ENCODE measurements at regions of chr7 and their contacts with region 1.

Region 1: DNA sequence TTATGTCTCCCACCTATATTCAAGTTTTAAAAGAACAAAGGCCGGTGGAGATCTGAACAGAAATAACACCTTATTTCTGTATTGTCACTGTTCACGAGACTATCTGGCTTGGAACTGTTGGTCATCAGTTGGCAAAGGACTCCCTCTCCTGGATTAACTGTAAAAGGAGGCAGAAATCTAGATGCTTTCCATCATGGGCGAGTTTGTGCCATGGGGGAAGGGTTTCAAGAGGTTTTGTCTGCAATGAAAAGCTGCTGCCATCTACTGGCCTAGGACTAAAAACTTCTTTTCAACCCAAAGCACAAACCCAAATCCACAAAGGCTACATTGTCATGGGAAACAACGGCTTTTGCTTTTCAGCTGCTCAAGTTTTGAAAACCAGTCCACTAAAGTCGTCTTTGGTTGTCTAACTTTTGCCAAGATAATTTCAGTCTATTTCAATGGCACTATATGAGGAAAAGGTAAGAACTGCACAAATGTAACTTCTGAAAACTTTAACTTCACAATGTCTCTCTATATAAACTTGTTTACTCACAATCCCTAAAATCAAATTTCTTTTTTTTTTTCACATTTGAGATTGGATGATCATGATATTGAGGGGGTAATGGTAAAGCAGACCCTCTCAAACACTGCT is 196.8 kb downstream of the SKAP2 start:
- DNase-seq: peak; percentile 94
- ATAC-seq: peak; percentile 93
- H3K4me3 ChIP-seq: no peak overlapping the region
- H3K27ac ChIP-seq: no peak overlapping the region
- H3K4me1 ChIP-seq: peaks cover 24% of the 10 kb centered on the region
- H3K27me3 ChIP-seq: no peaks in the 10 kb centered on the region
- CTCF ChIP-seq: peak; percentile 97

Region 2: GRCh38 chr7:26090927-26091519 is 576.6 kb before region 1 on chr7:
- CTCF ChIA-PET with region 1: no interaction called
- POLR2A ChIA-PET with region 1: no interaction called
- intact Hi-C with region 1: loop called (anchors 5 kb)
- DNase-seq: peak; percentile 60
- ATAC-seq: peak; percentile 89
- H3K4me3 ChIP-seq: peak overlapping the region; percentile 26; the same call in 1 of the 2 replicates
- H3K27ac ChIP-seq: no peak overlapping the region
- H3K4me1 ChIP-seq: peaks cover 8% of the 10 kb centered on the region
- H3K27me3 ChIP-seq: no peaks in the 10 kb centered on the region
- CTCF ChIP-seq: peak; percentile 88

Region 3: GRCh38 chr7:26398756-26399501 is 268.7 kb before region 1 on chr7:
- CTCF ChIA-PET with region 1: no interaction called
- POLR2A ChIA-PET with region 1: no interaction called
- intact Hi-C with region 1: loop called (anchors 1 kb)
- DNase-seq: peak; percentile 53
- ATAC-seq: peak; percentile 79
- H3K4me3 ChIP-seq: peak overlapping the region; percentile 75
- H3K27ac ChIP-seq: peak overlapping the region; percentile 20; the same call in 1 of the 2 replicates
- H3K4me1 ChIP-seq: peaks cover 11% of the 10 kb centered on the region
- H3K27me3 ChIP-seq: no peaks in the 10 kb centered on the region
- CTCF ChIP-seq: peak; percentile 43; the same call in 1 of the 2 replicates

Region 4: DNA sequence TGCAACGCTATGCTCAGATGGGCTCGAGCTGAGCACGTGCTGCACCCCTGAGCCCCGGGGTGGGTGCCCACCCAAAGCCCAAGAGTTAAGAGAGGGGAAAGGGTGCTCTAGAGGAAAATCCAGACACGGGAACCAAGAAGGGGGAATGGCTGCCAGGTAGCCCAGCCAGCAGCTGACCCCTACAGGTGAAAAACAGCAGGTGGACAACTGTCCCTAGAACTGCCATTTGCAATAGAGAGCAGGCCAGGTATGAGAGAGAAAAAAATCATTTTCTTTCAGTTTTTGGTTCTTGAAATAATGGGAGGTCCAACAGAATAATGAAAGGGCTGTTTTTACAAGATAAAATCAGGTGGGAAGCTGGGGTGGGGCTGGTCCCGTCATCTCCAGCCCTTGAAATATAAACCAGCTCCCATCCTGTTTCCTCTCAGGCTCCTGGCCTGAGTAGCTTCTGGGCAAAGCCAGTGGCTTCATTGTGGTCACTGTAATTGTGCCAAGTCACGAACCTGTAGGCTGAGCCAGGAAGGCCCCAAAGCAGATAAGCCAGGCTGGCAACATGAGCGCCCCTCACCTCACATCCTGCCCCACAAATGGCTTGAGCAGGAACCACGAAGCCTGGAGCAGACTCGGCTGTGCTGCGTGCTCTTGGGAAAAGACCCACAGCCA is 118.2 kb before region 1 on chr7:
- CTCF ChIA-PET with region 1: no interaction called
- POLR2A ChIA-PET with region 1: no interaction called
- intact Hi-C with region 1: loop called (anchors 1 kb)
- DNase-seq: peak; percentile 98
- ATAC-seq: peak; percentile 89
- H3K4me3 ChIP-seq: peak overlapping the region; percentile 35
- H3K27ac ChIP-seq: peak overlapping the region; percentile 100
- H3K4me1 ChIP-seq: peaks cover 52% of the 10 kb centered on the region
- H3K27me3 ChIP-seq: no peaks in the 10 kb centered on the region
- CTCF ChIP-seq: peak; percentile 39; the same call in 1 of the 2 replicates

Region 5: GRCh38 chr7:26694141-26694540 is 26.5 kb after region 1 on chr7:
- CTCF ChIA-PET with region 1: interaction called, 14 read pairs
- POLR2A ChIA-PET with region 1: interaction called, 4 read pairs
- intact Hi-C with region 1: no loop called
- DNase-seq: no peak
- ATAC-seq: no peak
- H3K4me3 ChIP-seq: no peak overlapping the region
- H3K27ac ChIP-seq: no peak overlapping the region
- H3K4me1 ChIP-seq: peaks cover 15% of the 10 kb centered on the region
- H3K27me3 ChIP-seq: no peaks in the 10 kb centered on the region
- CTCF ChIP-seq: no peak

Region 6: GRCh38 chr7:27169658-27170425 is 502.2 kb after region 1 on chr7:
- CTCF ChIA-PET with region 1: no interaction called
- POLR2A ChIA-PET with region 1: no interaction called
- intact Hi-C with region 1: no loop called
- DNase-seq: peak; percentile 62
- ATAC-seq: peak; percentile 0
- H3K4me3 ChIP-seq: peak overlapping the region; percentile 84
- H3K27ac ChIP-seq: peak overlapping the region; percentile 97
- H3K4me1 ChIP-seq: peaks cover 17% of the 10 kb centered on the region
- H3K27me3 ChIP-seq: no peaks in the 10 kb centered on the region
- CTCF ChIP-seq: no peak

Measured in PC-3 (cell line).